ENCODE measurements at regions of chr19 and their contacts with region 1.

Region 1: GRCh38 chr19:12139885-12140547 is at the start of gene ZNF20:
- H3K4me3 Mint-ChIP-seq: peak within 1 kb of the TSS; percentile 92
- H3K27ac Mint-ChIP-seq: peak within 1 kb of the TSS; percentile 82
- H3K4me1 Mint-ChIP-seq: peaks cover 39% of the 10 kb centered on the region
- H3K27me3 Mint-ChIP-seq: no peaks in the 10 kb centered on the region

Region 2: DNA sequence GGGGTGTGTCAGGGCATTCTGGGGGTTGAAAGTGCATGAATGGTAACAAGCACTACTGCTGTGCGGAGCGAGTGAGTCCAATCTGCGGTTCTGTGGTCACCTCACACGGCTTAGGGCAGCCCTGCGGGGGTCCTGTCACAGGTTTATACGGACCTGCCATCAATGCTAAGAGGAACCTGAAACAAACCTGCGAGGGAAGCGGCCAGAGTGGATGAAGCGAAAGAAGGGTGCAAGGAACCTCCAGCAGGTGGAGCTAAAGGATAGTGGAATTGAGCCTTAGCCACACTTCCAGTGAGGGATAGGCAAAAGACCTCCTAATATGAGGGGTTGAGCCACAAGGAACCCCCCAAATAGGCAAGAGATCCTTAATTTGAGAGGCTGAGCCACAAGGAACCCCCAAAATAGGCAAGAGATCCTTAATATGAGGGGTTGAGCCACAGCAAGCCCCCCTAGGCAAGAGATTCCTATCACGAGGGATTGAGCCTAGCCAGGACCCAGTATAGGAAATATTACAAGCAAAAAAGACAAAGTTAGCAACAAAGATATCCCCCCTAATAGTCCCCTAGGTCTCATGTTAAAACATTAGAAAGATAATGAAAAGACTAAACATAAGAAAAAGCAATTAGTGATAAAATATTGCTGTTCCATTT is 258.7 kb before region 1 on chr19:
- intact Hi-C with region 1: loop called (anchors 2 kb)
- H3K4me3 Mint-ChIP-seq: no peak overlapping the region
- H3K27ac Mint-ChIP-seq: no peak overlapping the region
- H3K4me1 Mint-ChIP-seq: no peaks in the 10 kb centered on the region
- H3K27me3 Mint-ChIP-seq: peaks cover 6% of the 10 kb centered on the region

Region 3: GRCh38 chr19:11964858-11965645 is 175.0 kb before region 1 on chr19 and contains the start of gene ZNF763:
- intact Hi-C with region 1: loop called (anchors 1 kb)
- H3K4me3 Mint-ChIP-seq: peak within 1 kb of the TSS; percentile 93
- H3K27ac Mint-ChIP-seq: peak within 1 kb of the TSS; percentile 92
- H3K4me1 Mint-ChIP-seq: peaks cover 42% of the 10 kb centered on the region
- H3K27me3 Mint-ChIP-seq: no peaks in the 10 kb centered on the region

Region 4: DNA sequence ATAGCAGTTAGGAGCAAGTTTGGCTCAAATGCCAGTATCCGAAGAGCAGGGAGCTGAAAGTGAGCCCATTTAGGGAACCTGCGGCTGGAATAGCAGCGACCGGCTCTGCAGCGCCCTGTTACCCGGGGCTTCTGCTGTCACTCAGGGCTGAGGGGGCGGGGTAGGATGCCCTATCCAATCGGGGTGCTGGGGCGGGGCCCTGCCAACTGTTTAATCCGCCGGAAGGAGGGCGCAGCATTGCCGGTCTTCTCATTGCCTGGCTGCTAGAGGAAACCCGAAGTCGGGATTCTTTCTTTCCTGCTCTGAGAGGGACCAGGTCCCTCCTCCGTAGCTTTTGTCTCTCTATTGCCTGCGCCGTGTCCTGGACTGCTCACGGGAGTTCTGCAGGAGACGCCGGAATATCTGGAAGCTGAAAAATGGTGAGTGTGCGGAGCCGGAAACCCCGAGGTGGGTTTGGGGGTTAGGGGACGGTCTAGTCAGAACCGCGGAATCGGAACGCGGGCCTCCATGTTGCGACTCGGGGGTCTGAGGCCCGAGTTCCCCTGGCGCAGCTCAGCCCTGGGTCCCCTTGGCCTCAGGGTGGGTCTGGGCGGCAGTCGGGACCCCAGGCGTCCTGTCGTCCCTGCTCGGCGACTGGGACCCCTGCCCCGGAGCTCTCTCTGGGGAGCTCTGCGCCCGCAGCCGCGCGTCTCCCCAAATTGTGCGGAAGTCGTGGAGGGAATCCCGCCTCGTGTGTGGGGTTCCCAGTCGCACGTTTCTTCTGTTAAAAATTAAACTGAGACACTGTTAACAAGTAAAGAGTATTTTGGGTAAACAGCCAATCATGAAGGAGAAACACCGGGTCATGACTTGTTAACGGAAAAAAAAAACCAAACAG is 152.4 kb before region 1 on chr19:
- intact Hi-C with region 1: loop called (anchors 2 kb)
- H3K4me3 Mint-ChIP-seq: peak overlapping the region; percentile 98
- H3K27ac Mint-ChIP-seq: peak overlapping the region; percentile 97
- H3K4me1 Mint-ChIP-seq: peaks cover 25% of the 10 kb centered on the region
- H3K27me3 Mint-ChIP-seq: peaks cover 2% of the 10 kb centered on the region

Region 5: GRCh38 chr19:12092065-12092867 is 47.8 kb before region 1 on chr19:
- intact Hi-C with region 1: loop called (anchors 1 kb)
- H3K4me3 Mint-ChIP-seq: peak overlapping the region; percentile 84
- H3K27ac Mint-ChIP-seq: peak overlapping the region; percentile 81
- H3K4me1 Mint-ChIP-seq: peaks cover 14% of the 10 kb centered on the region
- H3K27me3 Mint-ChIP-seq: no peaks in the 10 kb centered on the region

Region 6: DNA sequence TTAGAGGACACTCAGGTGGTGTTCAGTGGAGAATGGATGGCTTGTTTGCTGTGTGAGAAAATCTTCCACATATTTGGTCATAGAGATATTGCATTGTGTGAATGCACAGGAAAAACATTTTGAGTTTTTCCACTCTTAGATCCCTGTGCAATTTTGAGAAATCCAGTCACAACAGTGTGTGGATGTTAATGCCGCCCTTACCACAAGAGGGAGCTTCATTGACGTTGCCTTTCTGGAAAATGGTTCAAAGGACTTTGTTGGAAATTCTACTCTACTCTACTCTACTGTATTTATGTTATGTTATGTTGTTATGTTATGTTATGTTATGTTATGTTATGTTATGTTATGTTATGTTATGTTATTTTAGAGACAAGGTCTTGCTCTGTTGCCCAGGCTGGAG is 13.3 kb before region 1 on chr19:
- intact Hi-C with region 1: no loop called
- H3K4me3 Mint-ChIP-seq: no peak overlapping the region
- H3K27ac Mint-ChIP-seq: no peak overlapping the region
- H3K4me1 Mint-ChIP-seq: no peaks in the 10 kb centered on the region
- H3K27me3 Mint-ChIP-seq: no peaks in the 10 kb centered on the region

Region 7: DNA sequence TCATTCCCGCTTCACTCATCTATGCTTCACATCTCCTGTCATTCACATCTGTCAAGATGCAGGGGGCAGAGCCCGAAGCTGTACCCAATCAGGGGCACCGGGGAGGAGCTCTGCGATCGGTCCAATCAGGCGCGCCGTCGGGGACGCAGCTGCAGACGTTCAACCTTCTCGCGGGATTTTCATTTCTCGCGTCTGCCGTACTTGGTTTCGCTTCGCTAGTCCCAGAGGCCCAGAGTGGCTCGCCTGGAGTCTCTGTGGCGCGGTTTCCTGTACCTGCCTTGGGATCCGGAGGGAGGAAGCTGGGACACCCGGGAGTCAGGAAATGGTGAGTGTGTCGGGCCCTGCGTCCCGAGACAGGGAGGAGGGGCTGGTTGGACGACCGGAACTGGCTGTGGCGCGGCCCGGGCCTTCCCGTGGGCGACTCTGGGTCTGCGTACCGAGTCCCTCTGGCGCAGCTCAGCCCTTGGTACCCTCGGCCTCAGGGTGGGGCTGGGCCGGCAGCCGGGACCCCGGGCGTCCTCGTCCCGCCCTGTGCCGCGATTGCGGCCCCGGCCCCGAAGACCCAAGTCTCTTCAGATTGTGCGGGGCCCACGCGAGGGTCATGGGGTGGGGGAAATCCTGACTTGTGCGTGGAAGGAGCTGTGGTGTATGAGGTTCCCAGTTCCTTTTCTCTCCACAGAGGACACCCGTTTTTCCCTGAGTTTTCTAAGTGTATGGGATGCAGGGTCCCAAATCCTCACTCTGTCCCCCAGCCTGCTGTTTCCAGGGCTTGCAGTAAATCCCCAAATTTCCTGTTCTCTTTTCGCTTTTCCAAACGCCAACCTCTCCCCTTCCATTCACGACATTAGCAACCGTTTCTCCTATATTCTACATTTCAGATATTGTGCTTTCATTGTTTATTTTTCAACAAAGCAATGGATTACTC is 23.1 kb after region 1 on chr19 and contains the start of gene ZNF136:
- intact Hi-C with region 1: loop called (anchors 2 kb)
- H3K4me3 Mint-ChIP-seq: peak within 1 kb of the TSS; percentile 98
- H3K27ac Mint-ChIP-seq: peak within 1 kb of the TSS; percentile 98
- H3K4me1 Mint-ChIP-seq: peaks cover 39% of the 10 kb centered on the region
- H3K27me3 Mint-ChIP-seq: no peaks in the 10 kb centered on the region